WTC11 (cell line): ENCODE measurements at regions of chr3 and their contacts with region 1.

Region 1: GRCh38 chr3:4350789-4351163 is 47.6 kb downstream of the SETMAR start:
- DNase-seq: no peak
- ATAC-seq: 0 out of 2 replicates have a peak, but pooled peaks have one; percentile 26
- H3K4me3 Mint-ChIP-seq: no peak overlapping the region
- H3K27ac Mint-ChIP-seq: no peak overlapping the region
- H3K4me1 Mint-ChIP-seq: no peaks in the 10 kb centered on the region
- H3K27me3 Mint-ChIP-seq: no peaks in the 10 kb centered on the region
- CTCF ChIP-seq: peak; percentile 76

Region 2: GRCh38 chr3:4043867-4044575 is 306.8 kb before region 1 on chr3:
- CTCF ChIA-PET with region 1: no interaction called
- POLR2A ChIA-PET with region 1: no interaction called
- DNase-seq: no peak
- ATAC-seq: no peak
- H3K4me3 Mint-ChIP-seq: no peak overlapping the region
- H3K27ac Mint-ChIP-seq: no peak overlapping the region
- H3K4me1 Mint-ChIP-seq: no peaks in the 10 kb centered on the region
- H3K27me3 Mint-ChIP-seq: no peaks in the 10 kb centered on the region
- CTCF ChIP-seq: no peak

Region 3: DNA sequence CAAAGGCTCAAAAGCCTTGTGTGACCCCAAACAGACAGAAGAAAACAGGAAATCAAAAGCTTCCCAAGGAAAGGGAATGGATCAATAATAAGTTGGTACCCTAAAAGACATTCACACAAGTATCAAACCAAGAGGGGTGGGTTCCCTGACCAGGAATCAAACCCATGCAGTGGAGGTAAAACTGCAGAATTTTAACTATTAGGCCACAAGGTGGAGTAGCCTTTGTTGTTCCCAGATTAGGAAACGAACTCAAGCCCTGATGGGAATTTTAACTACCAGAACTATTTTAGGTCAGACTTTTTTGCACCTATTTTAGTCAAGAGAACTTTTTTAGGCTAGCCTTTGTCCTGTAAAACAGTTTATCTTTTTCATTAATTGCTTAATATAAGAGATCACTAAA is 16.2 kb before region 1 on chr3:
- CTCF ChIA-PET with region 1: interaction called, 18 read pairs
- POLR2A ChIA-PET with region 1: no interaction called
- DNase-seq: no peak
- ATAC-seq: peak; percentile 58
- H3K4me3 Mint-ChIP-seq: no peak overlapping the region
- H3K27ac Mint-ChIP-seq: peak overlapping the region; percentile 86; the same call in 1 of the 2 replicates
- H3K4me1 Mint-ChIP-seq: peaks cover 48% of the 10 kb centered on the region
- H3K27me3 Mint-ChIP-seq: no peaks in the 10 kb centered on the region; the same call in 1 of the 2 replicates
- CTCF ChIP-seq: no peak

Region 4: DNA sequence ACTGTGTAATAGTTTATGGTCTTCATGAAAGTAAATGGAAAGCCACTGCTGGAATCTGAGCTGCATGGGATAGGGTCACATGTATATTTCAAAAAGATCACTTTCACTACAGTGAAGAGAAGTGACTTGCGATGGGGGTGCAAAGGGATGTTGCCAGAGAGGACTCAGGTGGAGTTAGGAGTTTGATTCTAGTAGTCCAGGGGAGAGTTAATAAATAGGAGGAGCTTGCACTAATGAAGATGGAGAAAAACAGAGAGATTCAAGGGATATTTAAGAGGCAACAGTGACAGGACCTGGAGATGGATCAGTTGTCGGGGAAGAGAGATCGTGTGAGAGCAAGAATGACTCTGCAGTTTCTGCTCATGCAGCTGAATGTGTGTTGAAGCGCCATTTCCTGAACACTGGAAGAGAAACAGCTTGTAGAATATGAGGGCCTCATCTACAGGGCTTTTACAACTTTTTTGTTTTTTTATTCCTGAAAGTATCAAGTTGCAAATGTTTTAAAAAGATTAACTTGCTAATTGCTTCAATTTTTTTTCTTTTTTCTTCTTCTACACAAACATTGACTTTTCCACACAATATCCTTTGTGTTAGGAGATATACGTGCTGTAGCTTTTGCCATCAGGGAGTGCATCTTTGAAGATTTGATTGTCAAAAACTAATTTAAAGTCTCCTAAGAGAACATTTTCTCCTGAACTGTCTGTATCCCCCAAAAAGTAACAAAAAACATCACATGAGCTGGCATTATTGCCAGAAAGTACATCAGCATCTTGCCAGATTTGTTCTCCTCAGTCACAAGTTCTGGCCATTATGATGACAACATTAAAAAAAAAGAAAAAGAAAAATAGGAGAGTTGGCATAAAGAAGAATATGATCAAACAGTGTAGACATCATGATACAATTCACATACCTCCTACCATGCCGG is 10.1 kb before region 1 on chr3:
- CTCF ChIA-PET with region 1: interaction called, 18 read pairs
- POLR2A ChIA-PET with region 1: no interaction called
- DNase-seq: no peak
- ATAC-seq: no peak
- H3K4me3 Mint-ChIP-seq: no peak overlapping the region
- H3K27ac Mint-ChIP-seq: peak overlapping the region; percentile 23; the same call in 1 of the 2 replicates
- H3K4me1 Mint-ChIP-seq: peaks cover 33% of the 10 kb centered on the region
- H3K27me3 Mint-ChIP-seq: no peaks in the 10 kb centered on the region; the same call in 1 of the 2 replicates
- CTCF ChIP-seq: no peak

Region 5: DNA sequence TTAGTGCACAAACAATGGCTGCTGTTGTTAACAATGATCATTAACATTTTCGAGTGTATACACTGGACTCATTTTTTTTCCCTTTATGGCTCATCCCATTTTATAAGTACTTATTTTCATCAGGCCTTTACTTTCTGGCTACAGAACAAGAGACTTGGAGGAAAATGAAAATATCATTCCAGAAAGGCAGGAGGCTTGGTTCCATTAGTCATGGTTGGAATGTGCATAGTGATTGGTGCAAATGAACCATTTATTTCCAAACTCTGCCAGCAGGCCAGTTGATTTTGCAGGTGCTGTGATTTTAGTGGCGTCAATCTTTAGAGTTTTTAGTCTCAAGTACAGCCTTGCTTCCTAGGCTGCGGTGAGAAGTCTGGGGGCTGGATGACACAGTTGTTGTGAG is 294.2 kb after region 1 on chr3:
- CTCF ChIA-PET with region 1: no interaction called
- POLR2A ChIA-PET with region 1: no interaction called
- DNase-seq: no peak
- ATAC-seq: no peak
- H3K4me3 Mint-ChIP-seq: no peak overlapping the region
- H3K27ac Mint-ChIP-seq: no peak overlapping the region
- H3K4me1 Mint-ChIP-seq: no peaks in the 10 kb centered on the region
- H3K27me3 Mint-ChIP-seq: no peaks in the 10 kb centered on the region
- CTCF ChIP-seq: no peak